ENCODE measurements at regions of chr7 and their contacts with region 1.

Region 1: GRCh38 chr7:139602143-139602722 is 78.7 kb downstream of the CLEC2L start:
- DNase-seq: peak; percentile 49
- H3K4me3 ChIP-seq: no peak overlapping the region
- H3K27ac ChIP-seq: no peak overlapping the region
- H3K4me1 ChIP-seq: no peaks in the 10 kb centered on the region
- H3K27me3 ChIP-seq: no peaks in the 10 kb centered on the region
- CTCF ChIP-seq: peak; percentile 35 to 54
- POLR2A ChIP-seq: no peak

Region 2: DNA sequence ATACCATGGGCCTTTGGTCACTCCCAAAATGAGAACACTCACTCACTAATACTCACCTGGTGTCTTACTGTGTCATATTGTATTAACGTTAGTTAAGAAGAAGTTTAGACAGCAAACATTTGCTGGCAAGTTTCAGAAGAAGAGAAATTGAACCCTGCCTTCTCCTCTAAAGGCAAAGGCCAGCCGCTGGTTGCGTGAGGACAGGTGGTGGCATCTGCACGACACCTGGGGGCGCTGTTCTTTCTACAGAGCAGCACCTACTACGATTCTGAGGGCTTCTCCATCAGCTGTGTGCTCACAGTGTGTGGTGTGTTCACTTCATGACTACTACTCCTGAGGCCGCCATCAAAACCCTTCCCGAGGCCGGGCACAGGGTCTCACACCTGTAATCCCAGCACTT is 96.7 kb before region 1 on chr7:
- CTCF ChIA-PET with region 1: interaction called, 18 read pairs
- POLR2A ChIA-PET with region 1: no interaction called
- dilution Hi-C with region 1: no loop called
- intact Hi-C with region 1: no loop called
- DNase-seq: no peak
- H3K4me3 ChIP-seq: no peak overlapping the region
- H3K27ac ChIP-seq: no peak overlapping the region
- H3K4me1 ChIP-seq: no peaks in the 10 kb centered on the region
- H3K27me3 ChIP-seq: no peaks in the 10 kb centered on the region
- CTCF ChIP-seq: peak; percentile 8 to 28
- POLR2A ChIP-seq: no peak

Region 3: GRCh38 chr7:139582671-139583155 is 19.5 kb before region 1 on chr7:
- CTCF ChIA-PET with region 1: interaction called, 60 read pairs
- POLR2A ChIA-PET with region 1: no interaction called
- dilution Hi-C with region 1: no loop called
- intact Hi-C with region 1: no loop called
- DNase-seq: no peak
- H3K4me3 ChIP-seq: no peak overlapping the region
- H3K27ac ChIP-seq: no peak overlapping the region
- H3K4me1 ChIP-seq: no peaks in the 10 kb centered on the region
- H3K27me3 ChIP-seq: no peaks in the 10 kb centered on the region
- CTCF ChIP-seq: no peak
- POLR2A ChIP-seq: no peak

Region 4: GRCh38 chr7:139588632-139589031 is 13.6 kb before region 1 on chr7:
- CTCF ChIA-PET with region 1: interaction called, 60 read pairs
- POLR2A ChIA-PET with region 1: no interaction called
- dilution Hi-C with region 1: no loop called
- intact Hi-C with region 1: no loop called
- DNase-seq: no peak
- H3K4me3 ChIP-seq: no peak overlapping the region
- H3K27ac ChIP-seq: no peak overlapping the region
- H3K4me1 ChIP-seq: no peaks in the 10 kb centered on the region
- H3K27me3 ChIP-seq: no peaks in the 10 kb centered on the region
- CTCF ChIP-seq: no peak
- POLR2A ChIP-seq: no peak

Region 5: DNA sequence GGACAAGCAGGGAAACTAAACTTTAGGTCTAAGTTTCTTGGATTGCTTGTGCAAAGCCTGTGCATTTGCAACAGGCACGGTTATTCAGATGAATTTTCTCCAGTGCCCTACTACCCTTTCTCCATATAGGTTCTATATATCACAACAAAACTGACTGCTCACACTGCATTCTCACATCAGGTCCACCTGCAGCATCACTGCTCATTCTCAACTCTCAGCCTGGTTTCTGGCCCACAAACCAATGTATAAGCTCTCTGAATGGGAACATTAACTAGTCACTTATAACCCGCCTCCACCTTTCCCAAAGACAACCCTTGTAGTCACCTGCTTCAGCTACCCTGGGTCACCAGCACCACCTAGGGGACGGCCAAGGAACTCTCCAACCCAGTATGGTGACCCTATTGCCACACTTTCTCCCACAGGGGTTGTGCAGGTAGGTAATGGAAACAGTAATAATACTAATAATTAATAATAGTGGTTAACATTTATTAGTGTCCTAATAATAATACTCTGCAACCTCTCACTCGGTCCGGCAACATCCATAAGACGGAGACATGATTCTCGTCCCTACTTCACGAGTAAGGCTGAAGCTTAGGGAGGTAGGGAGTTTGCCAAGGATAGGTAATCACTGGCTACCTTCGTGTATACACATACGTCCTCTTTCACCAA is 18.6 kb after region 1 on chr7:
- CTCF ChIA-PET with region 1: interaction called, 53 read pairs
- POLR2A ChIA-PET with region 1: no interaction called
- dilution Hi-C with region 1: no loop called
- intact Hi-C with region 1: no loop called
- DNase-seq: peak; percentile 9
- H3K4me3 ChIP-seq: no peak overlapping the region
- H3K27ac ChIP-seq: no peak overlapping the region
- H3K4me1 ChIP-seq: no peaks in the 10 kb centered on the region
- H3K27me3 ChIP-seq: no peaks in the 10 kb centered on the region
- CTCF ChIP-seq: peak; percentile 59 to 63
- POLR2A ChIP-seq: no peak

Region 6: GRCh38 chr7:139660317-139661042 is 58.2 kb after region 1 on chr7:
- CTCF ChIA-PET with region 1: no interaction called
- POLR2A ChIA-PET with region 1: no interaction called
- dilution Hi-C with region 1: no loop called
- intact Hi-C with region 1: no loop called
- DNase-seq: no peak
- H3K4me3 ChIP-seq: no peak overlapping the region
- H3K27ac ChIP-seq: peak overlapping the region; percentile 32
- H3K4me1 ChIP-seq: peaks cover 9% of the 10 kb centered on the region
- H3K27me3 ChIP-seq: no peaks in the 10 kb centered on the region
- CTCF ChIP-seq: no peak
- POLR2A ChIP-seq: no peak

Region 7: GRCh38 chr7:139867847-139868246 is 265.6 kb after region 1 on chr7:
- CTCF ChIA-PET with region 1: no interaction called
- POLR2A ChIA-PET with region 1: no interaction called
- dilution Hi-C with region 1: no loop called
- intact Hi-C with region 1: no loop called
- DNase-seq: no peak
- H3K4me3 ChIP-seq: no peak overlapping the region
- H3K27ac ChIP-seq: no peak overlapping the region
- H3K4me1 ChIP-seq: peaks cover 7% of the 10 kb centered on the region
- H3K27me3 ChIP-seq: peaks cover 0 to 11% of the 10 kb centered on the region in 2 experiments
- CTCF ChIP-seq: no peak
- POLR2A ChIP-seq: no peak

Region 8: DNA sequence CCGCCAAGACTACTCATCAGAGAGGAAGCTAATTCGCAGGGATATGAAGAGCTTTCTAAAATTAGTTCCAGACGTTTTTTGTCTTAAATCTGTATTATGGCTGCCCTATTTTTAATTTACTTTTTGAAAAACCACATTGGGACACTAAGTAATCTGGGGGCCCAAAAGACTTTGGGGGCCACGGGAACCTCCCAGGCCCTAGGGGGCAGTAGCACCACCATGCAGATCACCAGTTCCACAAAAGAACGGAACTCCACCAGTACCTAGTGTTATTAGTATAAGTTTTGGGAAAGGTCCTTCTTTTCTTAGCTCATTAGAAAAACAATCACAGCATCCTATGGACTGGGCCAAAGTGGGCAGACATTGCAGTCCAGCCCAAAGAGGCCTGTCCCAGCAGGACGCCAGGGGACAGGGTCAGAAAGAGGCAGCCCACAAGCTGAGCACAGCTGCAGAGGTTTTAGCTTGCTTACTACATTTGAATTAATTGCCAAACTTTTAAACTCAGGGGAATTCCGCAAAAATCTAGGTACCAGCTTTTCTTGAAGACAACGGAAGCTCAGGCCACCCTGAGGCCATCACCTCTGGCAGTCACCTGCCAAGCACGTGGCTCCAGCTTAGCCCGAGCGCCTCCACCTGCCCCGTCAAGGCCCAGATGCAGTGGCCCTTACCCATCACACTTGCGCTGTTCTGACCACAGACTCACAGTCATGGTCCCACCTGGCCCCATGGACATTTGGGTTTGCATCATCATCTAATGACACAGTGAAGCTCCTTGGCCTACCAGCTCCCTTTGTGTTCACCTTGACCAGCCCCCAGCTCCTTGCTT is 385.7 kb after region 1 on chr7:
- CTCF ChIA-PET with region 1: interaction called, 15 read pairs
- POLR2A ChIA-PET with region 1: no interaction called
- dilution Hi-C with region 1: no loop called
- intact Hi-C with region 1: no loop called
- DNase-seq: no peak
- H3K4me3 ChIP-seq: no peak overlapping the region
- H3K27ac ChIP-seq: no peak overlapping the region
- H3K4me1 ChIP-seq: no peaks in the 10 kb centered on the region
- H3K27me3 ChIP-seq: peaks cover 0 to 6% of the 10 kb centered on the region in 2 experiments
- CTCF ChIP-seq: no peak
- POLR2A ChIP-seq: no peak

Region 9: GRCh38 chr7:139995017-139995931 is 393.0 kb after region 1 on chr7:
- CTCF ChIA-PET with region 1: interaction called, 176 read pairs
- POLR2A ChIA-PET with region 1: no interaction called
- dilution Hi-C with region 1: loop called (anchors 25 kb)
- intact Hi-C with region 1: no loop called
- DNase-seq: no peak
- H3K4me3 ChIP-seq: no peak overlapping the region
- H3K27ac ChIP-seq: no peak overlapping the region
- H3K4me1 ChIP-seq: no peaks in the 10 kb centered on the region
- H3K27me3 ChIP-seq: no peaks in the 10 kb centered on the region
- CTCF ChIP-seq: no peak
- POLR2A ChIP-seq: no peak

Measured in endothelial cell of umbilical vein (primary cell).